SK-N-SH (cell line): ENCODE measurements at regions of chr17 and their contacts with region 1.

Region 1: GRCh38 chr17:79612468-79613194 is 1.8 kb upstream of the RBFOX3 start:
- DNase-seq: peak; percentile 92
- H3K4me3 ChIP-seq: no peak overlapping the region; a peak in 1 of 4 replicates
- H3K27ac ChIP-seq: no peak overlapping the region
- H3K4me1 ChIP-seq: no peaks in the 10 kb centered on the region
- H3K27me3 ChIP-seq: peaks cover 57% of the 10 kb centered on the region
- CTCF ChIP-seq: peak; percentile 73
- EP300 ChIP-seq: no peak
- RAD21 ChIP-seq: peak; percentile 85

Region 2: GRCh38 chr17:79246225-79247190 is 366.1 kb before region 1 on chr17:
- CTCF ChIA-PET with region 1: no interaction called
- POLR2A ChIA-PET with region 1: no interaction called
- DNase-seq: peak; percentile 84
- H3K4me3 ChIP-seq: no peak overlapping the region
- H3K27ac ChIP-seq: peak overlapping the region in 1 of 2 experiments; percentile 59; a peak in 2 of 4 replicates
- H3K4me1 ChIP-seq: peaks cover 0 to 16% of the 10 kb centered on the region in 2 experiments; a peak in 1 of 4 replicates
- H3K27me3 ChIP-seq: peaks cover 7% of the 10 kb centered on the region
- CTCF ChIP-seq: no peak
- EP300 ChIP-seq: peak in 1 of 2 experiments; percentile 69; a peak in 2 of 4 replicates
- RAD21 ChIP-seq: peak; percentile 18; the same call in 1 of the 2 replicates

Region 3: DNA sequence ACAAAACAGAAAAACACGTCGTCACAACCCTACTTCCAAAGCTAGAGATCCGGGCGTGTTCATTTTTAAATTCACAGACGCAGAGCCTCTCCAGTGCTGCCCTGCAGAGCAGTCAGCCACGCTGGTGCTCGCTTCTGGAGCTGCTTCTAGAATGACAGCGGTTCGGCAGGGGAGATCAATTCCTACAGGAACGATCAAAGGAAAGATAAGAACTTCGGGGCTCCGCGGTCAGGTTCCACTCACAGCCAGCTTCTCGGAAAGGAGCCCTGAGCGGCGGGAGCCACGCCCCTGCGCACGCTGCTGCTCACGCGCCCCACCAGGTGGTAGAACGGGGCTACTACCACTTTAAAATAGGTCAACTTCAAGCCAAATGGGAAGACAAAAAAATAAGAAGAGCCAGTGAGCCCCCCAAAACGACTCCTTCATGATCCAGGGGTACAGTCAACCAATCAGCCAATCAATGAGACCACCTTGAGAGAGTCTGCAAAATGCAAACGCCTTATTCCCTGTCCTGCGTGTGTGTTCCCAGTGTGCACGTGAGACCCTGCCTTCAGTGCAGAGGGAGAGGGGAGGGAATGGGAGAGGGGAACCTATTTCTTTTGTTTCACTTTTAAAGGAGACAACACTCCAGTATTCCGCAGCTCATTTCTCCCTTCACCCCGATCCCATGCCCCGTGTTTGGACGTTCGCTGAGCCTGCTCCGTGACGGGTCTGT is 211.5 kb before region 1 on chr17:
- CTCF ChIA-PET with region 1: interaction called, 45 read pairs
- POLR2A ChIA-PET with region 1: no interaction called
- DNase-seq: peak; percentile 94
- H3K4me3 ChIP-seq: peak overlapping the region; percentile 34 to 55
- H3K27ac ChIP-seq: no peak overlapping the region
- H3K4me1 ChIP-seq: peaks cover 0 to 8% of the 10 kb centered on the region in 2 experiments; a peak in 1 of 4 replicates
- H3K27me3 ChIP-seq: peaks cover 55% of the 10 kb centered on the region
- CTCF ChIP-seq: peak; percentile 97
- EP300 ChIP-seq: no peak
- RAD21 ChIP-seq: peak; percentile 67

Region 4: GRCh38 chr17:79413611-79414010 is 199.0 kb before region 1 on chr17:
- CTCF ChIA-PET with region 1: interaction called, 31 read pairs
- POLR2A ChIA-PET with region 1: no interaction called
- DNase-seq: peak; percentile 72
- H3K4me3 ChIP-seq: no peak overlapping the region
- H3K27ac ChIP-seq: no peak overlapping the region
- H3K4me1 ChIP-seq: peaks cover 0 to 16% of the 10 kb centered on the region in 2 experiments; a peak in 1 of 4 replicates
- H3K27me3 ChIP-seq: peaks cover 53% of the 10 kb centered on the region
- CTCF ChIP-seq: no peak
- EP300 ChIP-seq: no peak
- RAD21 ChIP-seq: no peak

Region 5: DNA sequence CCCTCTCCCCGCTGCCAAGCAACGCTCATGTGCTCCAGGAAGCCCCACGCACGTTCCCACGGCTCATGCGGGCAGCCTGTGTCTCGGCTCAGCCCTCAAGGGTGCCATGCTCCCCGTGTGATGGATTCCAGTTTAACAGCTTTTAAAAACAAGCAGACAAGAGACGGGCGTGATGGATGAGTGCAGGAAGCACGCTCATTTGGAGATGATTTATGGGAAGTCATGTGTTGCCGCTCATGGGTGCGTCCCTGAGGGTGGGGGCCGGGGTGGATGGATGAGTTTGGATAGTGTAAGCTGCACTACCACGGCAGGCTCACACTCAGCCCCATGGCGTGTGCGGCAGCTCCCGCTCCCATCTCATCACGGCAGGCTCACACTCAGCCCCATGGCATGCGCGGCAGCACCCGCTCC is 134.6 kb before region 1 on chr17:
- CTCF ChIA-PET with region 1: interaction called, 12 read pairs
- POLR2A ChIA-PET with region 1: no interaction called
- DNase-seq: no peak
- H3K4me3 ChIP-seq: no peak overlapping the region
- H3K27ac ChIP-seq: no peak overlapping the region
- H3K4me1 ChIP-seq: peaks cover 0 to 4% of the 10 kb centered on the region in 2 experiments; a peak in 1 of 4 replicates
- H3K27me3 ChIP-seq: no peaks in the 10 kb centered on the region
- CTCF ChIP-seq: no peak
- EP300 ChIP-seq: no peak
- RAD21 ChIP-seq: no peak

Region 6: DNA sequence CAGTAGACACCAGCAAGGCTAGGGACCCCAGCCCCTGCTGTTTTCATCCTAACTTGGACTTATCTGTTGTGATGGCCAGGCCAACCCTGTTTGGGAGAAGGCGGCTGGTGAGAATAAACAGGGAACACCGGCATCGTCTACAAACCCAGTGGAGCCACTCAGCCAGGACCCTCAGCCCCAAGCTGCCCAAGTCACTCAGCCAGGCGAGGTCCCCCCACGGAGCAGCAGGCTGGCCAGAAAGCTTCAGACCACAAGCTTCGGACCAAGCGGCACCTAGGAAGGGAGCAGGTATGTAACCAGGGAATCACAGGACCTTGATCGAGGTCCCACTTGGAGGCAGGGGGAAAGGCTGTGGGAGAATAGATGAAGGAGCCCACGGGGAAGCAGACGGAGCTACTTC is 25.2 kb before region 1 on chr17:
- CTCF ChIA-PET with region 1: interaction called, 17 read pairs
- POLR2A ChIA-PET with region 1: no interaction called
- DNase-seq: no peak
- H3K4me3 ChIP-seq: no peak overlapping the region
- H3K27ac ChIP-seq: no peak overlapping the region
- H3K4me1 ChIP-seq: no peaks in the 10 kb centered on the region
- H3K27me3 ChIP-seq: no peaks in the 10 kb centered on the region
- CTCF ChIP-seq: no peak
- EP300 ChIP-seq: no peak
- RAD21 ChIP-seq: no peak

Region 7: DNA sequence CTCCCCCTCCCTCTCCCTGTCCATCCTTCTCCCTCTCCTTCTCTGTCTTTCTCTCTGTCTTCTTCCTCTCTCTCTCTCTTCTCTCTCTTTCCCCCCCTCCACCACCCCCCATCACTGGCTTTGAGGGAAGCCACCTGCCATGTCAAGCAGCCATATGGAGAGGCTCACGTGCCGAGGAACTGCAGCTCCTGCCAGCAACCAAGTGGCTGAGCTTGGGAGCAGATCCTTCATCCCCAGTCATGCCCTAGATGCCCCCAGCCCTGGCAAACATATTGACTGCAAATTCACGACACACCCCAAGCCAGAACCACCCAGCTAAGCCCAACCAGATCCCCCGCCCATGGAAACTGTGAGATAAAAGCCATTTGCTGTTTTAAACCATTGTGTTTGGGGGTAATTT is 39.1 kb after region 1 on chr17:
- CTCF ChIA-PET with region 1: interaction called, 14 read pairs
- POLR2A ChIA-PET with region 1: no interaction called
- DNase-seq: peak; percentile 17
- H3K4me3 ChIP-seq: no peak overlapping the region
- H3K27ac ChIP-seq: no peak overlapping the region
- H3K4me1 ChIP-seq: no peaks in the 10 kb centered on the region; a peak in 1 of 4 replicates
- H3K27me3 ChIP-seq: peaks cover 14% of the 10 kb centered on the region; the same call in 1 of the 2 replicates
- CTCF ChIP-seq: no peak
- EP300 ChIP-seq: no peak
- RAD21 ChIP-seq: no peak

Region 8: GRCh38 chr17:79707931-79708891 is 95.6 kb after region 1 on chr17:
- CTCF ChIA-PET with region 1: interaction called, 30 read pairs
- POLR2A ChIA-PET with region 1: no interaction called
- DNase-seq: peak; percentile 89
- H3K4me3 ChIP-seq: no peak overlapping the region
- H3K27ac ChIP-seq: no peak overlapping the region
- H3K4me1 ChIP-seq: no peaks in the 10 kb centered on the region
- H3K27me3 ChIP-seq: no peaks in the 10 kb centered on the region
- CTCF ChIP-seq: peak; percentile 83
- EP300 ChIP-seq: no peak
- RAD21 ChIP-seq: peak; percentile 92